Sigmoid colon (tissue), 7 donors: ENCODE measurements at regions of chr4 and their contacts with region 1.

Region 1: DNA sequence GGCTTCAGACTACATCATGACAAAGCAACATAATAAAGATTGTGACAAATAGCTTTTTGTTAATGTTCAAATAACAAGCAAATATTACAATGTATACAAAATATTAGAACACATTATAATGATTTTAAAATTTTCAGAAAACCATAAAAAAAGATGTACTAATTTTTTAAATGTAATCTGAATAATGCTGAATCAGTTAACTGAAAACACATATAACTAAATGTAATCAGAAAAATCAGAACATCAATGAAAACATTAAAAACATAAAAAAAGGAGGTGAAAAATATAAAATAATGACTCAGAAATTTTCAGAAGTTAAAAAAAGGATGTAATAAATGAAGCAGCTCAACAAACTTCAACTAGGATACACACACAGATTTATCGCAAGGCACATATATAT is 53.5 kb downstream of the ZNF721 start:
- DNase-seq: no peak
- H3K4me3 ChIP-seq: no peak overlapping the region
- H3K27ac ChIP-seq: no peak overlapping the region
- H3K4me1 ChIP-seq: no peaks in the 10 kb centered on the region
- H3K27me3 ChIP-seq: no peaks in the 10 kb centered on the region
- CTCF ChIP-seq: no peak
- EP300 ChIP-seq: no peak
- POLR2A ChIP-seq: no peak

Region 2: GRCh38 chr4:294732-295131 is 150.7 kb before region 1 on chr4:
- intact Hi-C with region 1: no loop called
- DNase-seq: no peak
- H3K4me3 ChIP-seq: no peak overlapping the region
- H3K27ac ChIP-seq: no peak overlapping the region
- H3K4me1 ChIP-seq: no peaks in the 10 kb centered on the region
- H3K27me3 ChIP-seq: no peaks in the 10 kb centered on the region
- CTCF ChIP-seq: no peak
- EP300 ChIP-seq: no peak
- POLR2A ChIP-seq: no peak

Region 3: GRCh38 chr4:373062-373839 is 72.2 kb before region 1 on chr4:
- intact Hi-C with region 1: loop called (anchors 10 kb)
- DNase-seq: no peak
- H3K4me3 ChIP-seq: no peak overlapping the region
- H3K27ac ChIP-seq: no peak overlapping the region
- H3K4me1 ChIP-seq: no peaks in the 10 kb centered on the region
- H3K27me3 ChIP-seq: no peaks in the 10 kb centered on the region
- CTCF ChIP-seq: no peak
- EP300 ChIP-seq: no peak
- POLR2A ChIP-seq: no peak

Region 4: DNA sequence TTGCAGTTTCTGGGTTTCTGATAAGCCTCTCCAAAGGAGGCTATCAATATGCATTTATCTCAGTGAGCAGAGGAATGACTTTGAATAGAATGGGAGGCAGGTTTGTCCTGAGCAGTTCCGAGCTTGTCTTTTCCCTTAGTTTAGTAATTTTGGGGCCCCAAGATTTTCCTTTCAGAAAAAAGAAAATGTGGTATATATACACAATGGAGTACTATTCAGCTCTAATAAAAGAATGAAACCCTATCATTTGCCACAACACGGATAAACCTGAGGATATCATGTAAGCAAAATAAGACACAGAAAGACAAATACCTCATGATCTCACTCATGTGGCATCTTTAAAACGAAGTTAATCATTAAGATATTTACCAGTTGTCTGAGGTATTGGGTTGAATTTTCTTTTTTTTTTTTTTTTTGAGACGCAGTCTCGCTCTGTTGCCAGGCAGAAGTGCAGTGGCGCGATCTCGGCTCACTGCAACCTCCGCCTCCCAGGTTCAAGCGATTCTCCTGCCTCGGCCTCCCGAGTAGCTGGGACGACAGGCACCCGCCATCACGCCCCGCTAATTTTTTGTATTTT is 53.0 kb after region 1 on chr4:
- intact Hi-C with region 1: no loop called
- DNase-seq: no peak
- H3K4me3 ChIP-seq: peak overlapping the region; percentile 79 to 94 (median 86)
- H3K27ac ChIP-seq: peak overlapping the region; percentile 83 to 90 (median 88)
- H3K4me1 ChIP-seq: peaks cover 0 to 40% (median 23%) of the 10 kb centered on the region in 4 donors
- H3K27me3 ChIP-seq: no peaks in the 10 kb centered on the region
- CTCF ChIP-seq: no peak
- EP300 ChIP-seq: no peak
- POLR2A ChIP-seq: no peak